CD4-positive, alpha-beta T cell (primary cell): ENCODE measurements at regions of chr2 and their contacts with region 1.

Region 1: GRCh38 chr2:43045866-43046261 is 180.5 kb downstream of the ZFP36L2 start:
- DNase-seq: no peak
- ATAC-seq: no peak
- H3K4me3 ChIP-seq: no peak overlapping the region
- H3K4me3 Mint-ChIP-seq: no peak overlapping the region
- H3K27ac ChIP-seq: no peak overlapping the region
- H3K27ac Mint-ChIP-seq: no peak overlapping the region
- H3K4me1 ChIP-seq: peaks cover 16% of the 10 kb centered on the region
- H3K4me1 Mint-ChIP-seq: peaks cover 20% of the 10 kb centered on the region
- H3K27me3 ChIP-seq: no peaks in the 10 kb centered on the region
- H3K27me3 Mint-ChIP-seq: no peaks in the 10 kb centered on the region
- CTCF ChIP-seq: no peak

Region 2: DNA sequence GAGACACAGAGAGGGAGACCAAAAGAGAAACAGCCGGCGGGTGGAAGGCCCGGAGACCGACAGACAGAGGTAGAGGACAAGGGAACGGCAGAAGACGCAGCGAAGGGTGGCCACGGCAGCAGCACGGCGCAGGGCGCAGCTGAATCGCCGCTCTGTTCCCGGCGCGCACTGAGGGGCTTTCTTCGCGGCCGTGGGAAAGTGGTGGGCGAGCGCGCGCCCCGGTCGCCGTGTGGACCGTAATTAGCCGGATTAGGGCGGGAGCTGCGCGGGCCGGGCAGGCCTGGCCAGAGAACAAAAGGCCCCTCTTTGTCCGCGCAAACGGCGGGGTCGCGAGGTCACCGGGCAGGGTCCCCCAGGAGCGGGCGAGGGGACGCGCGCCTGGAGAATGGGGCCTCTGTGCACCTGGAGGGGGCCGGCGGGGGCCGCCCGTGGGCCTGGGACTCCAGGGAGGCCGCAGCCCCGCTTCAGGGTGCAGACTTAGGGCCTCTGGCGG is 22.2 kb after region 1 on chr2:
- CTCF ChIA-PET with region 1: no interaction called
- POLR2A ChIA-PET with region 1: no interaction called
- intact Hi-C with region 1: loop called in 1 of 2 experiments (anchors 1 kb)
- DNase-seq: no peak
- ATAC-seq: no peak
- H3K4me3 ChIP-seq: no peak overlapping the region
- H3K4me3 Mint-ChIP-seq: no peak overlapping the region
- H3K27ac ChIP-seq: no peak overlapping the region
- H3K27ac Mint-ChIP-seq: no peak overlapping the region
- H3K4me1 ChIP-seq: no peaks in the 10 kb centered on the region
- H3K4me1 Mint-ChIP-seq: no peaks in the 10 kb centered on the region
- H3K27me3 ChIP-seq: no peaks in the 10 kb centered on the region
- H3K27me3 Mint-ChIP-seq: no peaks in the 10 kb centered on the region
- CTCF ChIP-seq: no peak

Region 3: DNA sequence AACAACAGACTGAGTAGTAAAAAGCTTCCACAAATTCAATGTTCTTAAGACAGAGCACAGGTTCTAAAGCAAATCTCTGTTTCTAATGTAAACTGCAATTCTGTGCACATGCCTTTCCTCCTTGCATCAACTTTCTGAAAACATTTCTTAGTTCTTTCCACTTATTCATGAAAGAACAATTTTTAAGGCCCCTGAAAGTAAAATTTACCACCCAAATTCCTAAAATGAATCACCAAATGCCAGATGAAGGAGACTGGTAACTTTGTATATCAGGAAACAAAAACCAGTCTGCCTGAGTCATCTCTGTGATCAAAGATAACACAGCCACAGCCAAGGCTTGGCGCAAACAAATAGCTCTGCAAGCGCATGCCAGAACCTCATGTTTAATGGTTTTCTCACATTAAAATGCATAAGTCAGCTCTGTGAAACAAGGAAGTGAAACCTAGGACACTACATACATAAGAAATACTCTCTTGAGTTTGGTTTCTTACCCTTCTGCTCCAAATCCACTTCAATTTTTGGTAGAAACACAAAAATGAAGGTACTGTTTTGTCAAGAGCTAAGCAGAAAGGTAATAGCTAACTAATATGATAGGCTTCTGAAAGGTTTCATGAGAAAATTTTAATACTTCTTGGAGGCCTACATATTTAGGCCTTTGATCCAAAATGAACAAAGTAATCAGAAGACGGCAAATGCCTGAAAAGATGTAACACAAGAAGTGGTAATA is 380.6 kb after region 1 on chr2:
- CTCF ChIA-PET with region 1: no interaction called
- POLR2A ChIA-PET with region 1: no interaction called
- intact Hi-C with region 1: no loop called
- DNase-seq: peak; percentile 18 to 82 (median 50)
- ATAC-seq: peak; percentile 91
- H3K4me3 ChIP-seq: no peak overlapping the region
- H3K4me3 Mint-ChIP-seq: peak overlapping the region; percentile 32
- H3K27ac ChIP-seq: peak overlapping the region in 1 of 2 donors; percentile 51
- H3K27ac Mint-ChIP-seq: peak overlapping the region; percentile 81
- H3K4me1 ChIP-seq: peaks cover 22% of the 10 kb centered on the region
- H3K4me1 Mint-ChIP-seq: peaks cover 35% of the 10 kb centered on the region
- H3K27me3 ChIP-seq: no peaks in the 10 kb centered on the region
- H3K27me3 Mint-ChIP-seq: no peaks in the 10 kb centered on the region
- CTCF ChIP-seq: no peak